ENCODE measurements at regions of chr6 and their contacts with region 1.

Region 1: GRCh38 chr6:42520786-42521607 is 42.8 kb upstream of the UBR2 start:
- DNase-seq: peak; percentile 55
- H3K4me3 Mint-ChIP-seq: no peak overlapping the region
- H3K27ac Mint-ChIP-seq: peak overlapping the region; percentile 89
- H3K4me1 Mint-ChIP-seq: peaks cover 10% of the 10 kb centered on the region
- H3K27me3 Mint-ChIP-seq: peaks cover 4% of the 10 kb centered on the region

Region 2: DNA sequence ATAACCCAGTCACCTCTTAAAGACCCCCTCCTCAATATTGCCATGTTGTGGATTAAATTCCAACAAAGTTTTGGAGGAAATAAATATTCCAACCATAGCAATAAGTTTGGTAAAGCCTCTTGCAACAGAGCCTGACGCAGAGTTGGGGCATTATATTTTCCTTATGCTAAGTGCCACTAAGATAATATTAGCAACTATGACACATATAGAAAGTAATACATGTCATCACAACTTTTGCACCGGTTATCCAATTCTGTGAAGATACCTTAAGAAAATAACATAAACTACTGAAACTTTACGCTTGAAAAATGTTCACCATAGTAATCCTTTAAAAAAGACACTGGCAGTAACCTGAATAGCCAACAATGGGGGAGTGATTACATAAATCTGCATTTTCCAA is 17.1 kb before region 1 on chr6:
- intact Hi-C with region 1: loop called (anchors 1 kb)
- DNase-seq: no peak
- H3K4me3 Mint-ChIP-seq: no peak overlapping the region
- H3K27ac Mint-ChIP-seq: no peak overlapping the region
- H3K4me1 Mint-ChIP-seq: peaks cover 9% of the 10 kb centered on the region
- H3K27me3 Mint-ChIP-seq: peaks cover 7% of the 10 kb centered on the region